ENCODE measurements at regions of chr19 and their contacts with region 1.

Region 1: DNA sequence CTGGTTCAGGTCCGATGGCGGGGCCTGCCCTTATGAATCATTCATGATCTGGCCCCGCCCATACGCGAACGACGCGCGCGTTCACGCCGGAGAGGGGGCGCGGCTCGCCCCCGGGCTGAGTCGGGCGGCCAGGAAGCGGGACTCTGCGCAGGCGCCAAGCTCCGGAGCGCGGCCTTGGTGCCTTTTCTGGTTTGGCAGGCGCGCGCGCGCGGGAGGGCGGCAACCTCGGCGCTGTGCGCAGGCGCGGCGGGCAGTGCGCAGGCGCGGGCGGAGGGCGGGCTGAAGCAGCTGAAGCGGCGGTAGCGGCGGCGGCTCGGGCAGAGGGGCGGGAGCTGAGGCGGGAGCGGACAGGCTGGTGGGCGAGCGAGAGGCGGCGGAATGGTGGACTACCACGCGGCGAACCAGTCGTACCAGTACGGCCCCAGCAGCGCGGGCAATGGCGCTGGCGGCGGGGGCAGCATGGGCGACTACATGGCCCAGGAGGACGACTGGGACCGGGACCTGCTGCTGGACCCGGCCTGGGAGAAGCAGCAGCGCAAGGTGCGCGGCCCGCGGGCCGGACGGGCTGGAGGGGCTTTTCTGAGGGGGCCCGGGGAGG is at the start of gene ACTN4:
- DNase-seq: peak; percentile 86 to 100
- H3K4me3 ChIP-seq: peak within 1 kb of the TSS; percentile 100
- H3K27ac ChIP-seq: peak within 1 kb of the TSS; percentile 99
- H3K4me1 ChIP-seq: peaks cover 24% of the 10 kb centered on the region
- H3K27me3 ChIP-seq: no peaks in the 10 kb centered on the region
- CTCF ChIP-seq: no peak
- total RNA-seq, gene ACTN4: 1,066 and 1,233 TPM in 2 replicates

Region 2: DNA sequence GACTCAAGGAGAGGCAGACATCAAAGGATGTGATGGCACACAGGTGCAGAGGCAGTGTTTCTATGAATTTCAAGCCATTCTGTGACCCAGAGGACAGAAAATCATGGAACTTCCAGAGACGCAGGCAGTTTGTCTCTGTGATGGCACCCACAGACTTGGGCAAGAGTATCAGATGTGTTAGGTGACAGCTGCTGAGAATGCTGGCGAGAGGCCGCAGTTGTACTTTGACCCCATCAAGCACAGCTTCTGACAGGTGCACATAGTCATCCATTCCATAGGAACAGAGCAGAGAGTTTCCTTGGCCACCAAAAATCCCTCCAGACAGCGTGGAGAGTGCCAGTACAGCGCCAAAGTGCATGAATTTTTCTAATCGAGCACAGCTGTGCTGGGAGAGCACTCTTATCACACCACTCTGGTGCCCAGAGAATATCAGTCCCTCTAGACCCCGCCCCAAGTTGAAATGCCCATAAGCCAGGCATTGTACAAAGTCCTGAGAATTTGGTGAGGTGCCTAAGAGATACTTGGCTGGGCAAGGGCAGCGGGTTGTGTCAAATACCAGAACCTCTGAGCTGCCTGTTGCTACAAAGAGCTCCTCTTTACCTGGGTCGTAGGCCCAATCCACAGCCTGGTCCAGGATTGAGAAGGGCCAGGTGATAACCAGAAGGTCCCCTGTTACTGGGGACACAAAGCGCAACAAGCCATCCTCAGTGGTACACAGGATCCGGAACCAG is 753.5 kb before region 1 on chr19:
- CTCF ChIA-PET with region 1: no interaction called
- POLR2A ChIA-PET with region 1: interaction called, 16 read pairs
- intact Hi-C with region 1: no loop called
- DNase-seq: no peak
- H3K4me3 ChIP-seq: no peak overlapping the region
- H3K27ac ChIP-seq: no peak overlapping the region
- H3K4me1 ChIP-seq: no peaks in the 10 kb centered on the region
- H3K27me3 ChIP-seq: peaks cover 68% of the 10 kb centered on the region
- CTCF ChIP-seq: no peak

Region 3: GRCh38 chr19:38464421-38465082 is 182.9 kb before region 1 on chr19:
- CTCF ChIA-PET with region 1: no interaction called
- POLR2A ChIA-PET with region 1: no interaction called
- intact Hi-C with region 1: no loop called
- DNase-seq: no peak
- H3K4me3 ChIP-seq: no peak overlapping the region
- H3K27ac ChIP-seq: no peak overlapping the region
- H3K4me1 ChIP-seq: no peaks in the 10 kb centered on the region
- H3K27me3 ChIP-seq: peaks cover 68% of the 10 kb centered on the region
- CTCF ChIP-seq: no peak

Region 4: GRCh38 chr19:38606131-38606530 is 41.3 kb before region 1 on chr19:
- CTCF ChIA-PET with region 1: no interaction called
- POLR2A ChIA-PET with region 1: no interaction called
- intact Hi-C with region 1: no loop called
- DNase-seq: no peak
- H3K4me3 ChIP-seq: no peak overlapping the region
- H3K27ac ChIP-seq: no peak overlapping the region
- H3K4me1 ChIP-seq: no peaks in the 10 kb centered on the region
- H3K27me3 ChIP-seq: no peaks in the 10 kb centered on the region
- CTCF ChIP-seq: no peak

Region 5: GRCh38 chr19:38658462-38659306 is 11.2 kb after region 1 on chr19:
- CTCF ChIA-PET with region 1: interaction called, 3 read pairs
- POLR2A ChIA-PET with region 1: interaction called, 11 read pairs
- intact Hi-C with region 1: loop called (anchors 1 kb)
- DNase-seq: peak; percentile 70 to 98
- H3K4me3 ChIP-seq: peak overlapping the region; percentile 54
- H3K27ac ChIP-seq: peak overlapping the region; percentile 99
- H3K4me1 ChIP-seq: peaks cover 97% of the 10 kb centered on the region
- H3K27me3 ChIP-seq: no peaks in the 10 kb centered on the region
- CTCF ChIP-seq: no peak

Region 6: GRCh38 chr19:38683393-38684080 is 36.1 kb after region 1 on chr19:
- CTCF ChIA-PET with region 1: no interaction called
- POLR2A ChIA-PET with region 1: interaction called, 32 read pairs
- intact Hi-C with region 1: loop called (anchors 1 kb)
- DNase-seq: peak; percentile 97 to 100
- H3K4me3 ChIP-seq: peak overlapping the region; percentile 36; the same call in 1 of the 2 replicates
- H3K27ac ChIP-seq: peak overlapping the region; percentile 100
- H3K4me1 ChIP-seq: peaks cover 95% of the 10 kb centered on the region
- H3K27me3 ChIP-seq: no peaks in the 10 kb centered on the region
- CTCF ChIP-seq: no peak

Region 7: GRCh38 chr19:38718747-38719543 is 71.5 kb after region 1 on chr19:
- CTCF ChIA-PET with region 1: no interaction called
- POLR2A ChIA-PET with region 1: interaction called, 6 read pairs
- intact Hi-C with region 1: loop called (anchors 2 kb)
- DNase-seq: peak; percentile 56 to 93
- H3K4me3 ChIP-seq: no peak overlapping the region
- H3K27ac ChIP-seq: peak overlapping the region; percentile 80
- H3K4me1 ChIP-seq: peaks cover 11% of the 10 kb centered on the region
- H3K27me3 ChIP-seq: no peaks in the 10 kb centered on the region
- CTCF ChIP-seq: no peak; the same call in 1 of the 2 replicates

Region 8: DNA sequence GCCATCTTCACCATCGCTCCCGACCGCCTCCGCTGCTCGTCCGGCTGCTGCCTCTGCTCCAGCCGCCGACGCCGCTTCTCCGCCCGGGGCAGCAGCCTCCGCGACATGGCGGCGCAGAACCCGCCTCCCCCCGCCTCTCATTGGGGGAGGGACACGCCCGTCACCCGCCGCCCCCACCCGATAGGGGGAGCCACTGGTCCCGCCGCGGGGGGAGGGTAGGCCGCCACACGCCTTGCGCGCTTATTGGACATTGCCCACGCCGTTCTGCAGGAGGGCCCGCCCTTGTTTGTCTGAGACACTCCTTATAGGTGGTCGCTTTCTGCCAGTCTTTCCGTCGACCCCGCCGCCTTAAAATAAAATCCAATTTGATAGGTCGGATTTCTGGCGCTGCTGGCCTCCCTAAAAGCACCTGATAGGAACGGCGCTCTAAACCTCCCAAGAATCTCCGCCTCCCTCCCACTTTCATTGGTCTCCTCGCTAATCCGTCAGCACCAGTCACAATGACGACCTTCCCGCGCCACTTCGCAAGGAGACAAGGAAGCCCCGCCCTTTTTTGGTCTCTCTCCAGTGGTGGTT is 202.5 kb after region 1 on chr19 and contains the start of gene HNRNPL:
- CTCF ChIA-PET with region 1: no interaction called
- POLR2A ChIA-PET with region 1: interaction called, 25 read pairs
- intact Hi-C with region 1: no loop called
- DNase-seq: peak; percentile 99
- H3K4me3 ChIP-seq: peak within 1 kb of the TSS; percentile 79
- H3K27ac ChIP-seq: peak within 1 kb of the TSS; percentile 93
- H3K4me1 ChIP-seq: peaks cover 35% of the 10 kb centered on the region
- H3K27me3 ChIP-seq: no peaks in the 10 kb centered on the region
- CTCF ChIP-seq: peak; percentile 63
- total RNA-seq, gene HNRNPL: 368 and 443 TPM in 2 replicates

Measured in PC-9 (cell line).